IMR-90 (cell line): ENCODE measurements at regions of chr6 and their contacts with region 1.

Region 1: GRCh38 chr6:16712931-16713484 is 48.3 kb downstream of the ATXN1 start:
- DNase-seq: peak; percentile 95
- ATAC-seq: peak; percentile 82
- H3K4me3 ChIP-seq: no peak overlapping the region; the same call in 1 of the 2 replicates
- H3K27ac ChIP-seq: peak overlapping the region; percentile 34; the same call in 1 of the 2 replicates
- H3K4me1 ChIP-seq: peaks cover 19% of the 10 kb centered on the region
- H3K27me3 ChIP-seq: no peaks in the 10 kb centered on the region
- CTCF ChIP-seq: peak; percentile 41
- POLR2A ChIP-seq: no peak
- RAD21 ChIP-seq: peak; percentile 31

Region 2: DNA sequence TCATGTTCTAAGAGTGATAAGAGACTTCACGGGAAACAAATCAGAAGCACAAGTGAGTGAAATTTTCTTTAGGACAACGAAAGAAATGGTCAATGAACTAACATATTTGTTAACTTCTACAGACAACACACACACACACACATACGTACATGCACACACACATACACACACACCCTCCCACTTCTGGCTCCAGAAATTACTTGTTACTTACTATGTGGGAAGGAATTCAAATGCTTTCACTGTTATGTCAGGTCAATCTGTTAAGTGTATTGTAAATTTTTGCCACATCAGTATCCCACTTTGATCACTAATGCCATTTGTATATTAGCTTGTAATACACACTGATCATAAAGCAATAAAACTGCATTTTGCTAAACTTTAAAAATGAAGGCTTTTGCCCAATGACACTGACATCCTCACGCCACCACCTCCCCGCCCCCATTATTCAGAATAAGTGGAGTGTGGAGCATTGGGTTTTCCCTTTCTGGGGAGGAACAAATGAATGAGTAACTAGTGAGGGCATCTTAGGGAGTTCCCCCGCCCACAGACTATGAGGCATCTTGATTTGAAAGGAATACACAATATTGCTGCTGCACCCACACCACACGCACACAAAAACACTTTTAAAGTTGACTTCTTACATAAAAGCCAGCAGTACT is 28.0 kb before region 1 on chr6:
- CTCF ChIA-PET with region 1: no interaction called
- POLR2A ChIA-PET with region 1: no interaction called
- dilution Hi-C with region 1: no loop called
- in situ Hi-C with region 1: no loop called
- intact Hi-C with region 1: loop called (anchors 1 kb)
- DNase-seq: peak; percentile 82
- ATAC-seq: no peak
- H3K4me3 ChIP-seq: no peak overlapping the region
- H3K27ac ChIP-seq: no peak overlapping the region
- H3K4me1 ChIP-seq: peaks cover 23% of the 10 kb centered on the region
- H3K27me3 ChIP-seq: no peaks in the 10 kb centered on the region
- CTCF ChIP-seq: no peak
- POLR2A ChIP-seq: no peak
- RAD21 ChIP-seq: no peak

Region 3: GRCh38 chr6:16723826-16724225 is 10.8 kb after region 1 on chr6:
- CTCF ChIA-PET with region 1: interaction called, 3 read pairs
- POLR2A ChIA-PET with region 1: no interaction called
- dilution Hi-C with region 1: no loop called
- in situ Hi-C with region 1: no loop called
- intact Hi-C with region 1: loop called (anchors 1 kb)
- DNase-seq: peak; percentile 96
- ATAC-seq: peak; percentile 73
- H3K4me3 ChIP-seq: no peak overlapping the region
- H3K27ac ChIP-seq: peak overlapping the region; percentile 66; the same call in 1 of the 2 replicates
- H3K4me1 ChIP-seq: peaks cover 19% of the 10 kb centered on the region
- H3K27me3 ChIP-seq: no peaks in the 10 kb centered on the region
- CTCF ChIP-seq: no peak
- POLR2A ChIP-seq: no peak
- RAD21 ChIP-seq: no peak; the same call in 1 of the 2 replicates

Region 4: GRCh38 chr6:16736856-16737775 is 24.1 kb after region 1 on chr6:
- CTCF ChIA-PET with region 1: no interaction called
- POLR2A ChIA-PET with region 1: no interaction called
- dilution Hi-C with region 1: no loop called
- in situ Hi-C with region 1: no loop called
- intact Hi-C with region 1: no loop called
- DNase-seq: peak; percentile 61
- ATAC-seq: no peak
- H3K4me3 ChIP-seq: no peak overlapping the region
- H3K27ac ChIP-seq: no peak overlapping the region
- H3K4me1 ChIP-seq: peaks cover 13% of the 10 kb centered on the region
- H3K27me3 ChIP-seq: no peaks in the 10 kb centered on the region
- CTCF ChIP-seq: no peak
- POLR2A ChIP-seq: no peak
- RAD21 ChIP-seq: no peak